ENCODE measurements at regions of chr14 and their contacts with region 1.

Region 1: GRCh38 chr14:41609704-41610183 is 3.1 kb downstream of the LRFN5 start:
- DNase-seq: peak; percentile 95
- H3K4me3 ChIP-seq: peak overlapping the region; percentile 79
- H3K27ac ChIP-seq: peak overlapping the region; percentile 84
- H3K4me1 ChIP-seq: peaks cover 29% of the 10 kb centered on the region
- H3K27me3 ChIP-seq: no peaks in the 10 kb centered on the region
- CTCF ChIP-seq: peak; percentile 84

Region 2: DNA sequence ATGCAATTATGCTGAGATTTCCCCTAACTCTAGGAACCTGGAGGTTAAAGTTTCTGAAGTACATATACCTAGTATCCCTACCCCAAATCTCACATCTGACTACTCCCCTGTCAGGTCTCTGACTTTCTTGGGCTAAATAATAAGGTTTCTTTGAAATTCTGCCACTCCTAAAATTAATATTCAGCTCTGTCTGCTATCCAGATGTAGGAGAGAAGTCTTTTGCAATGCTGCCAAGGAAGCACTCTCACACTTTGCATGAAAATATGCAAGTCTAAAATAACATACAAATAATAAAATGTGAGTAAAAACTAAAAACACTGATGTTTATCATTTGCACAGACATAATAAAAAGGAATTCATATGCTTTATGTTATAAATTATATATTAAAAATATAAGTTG is 199.9 kb before region 1 on chr14:
- CTCF ChIA-PET with region 1: no interaction called
- POLR2A ChIA-PET with region 1: no interaction called
- intact Hi-C with region 1: no loop called
- DNase-seq: no peak
- H3K4me3 ChIP-seq: no peak overlapping the region
- H3K27ac ChIP-seq: no peak overlapping the region
- H3K4me1 ChIP-seq: no peaks in the 10 kb centered on the region
- H3K27me3 ChIP-seq: no peaks in the 10 kb centered on the region
- CTCF ChIP-seq: no peak

Region 3: DNA sequence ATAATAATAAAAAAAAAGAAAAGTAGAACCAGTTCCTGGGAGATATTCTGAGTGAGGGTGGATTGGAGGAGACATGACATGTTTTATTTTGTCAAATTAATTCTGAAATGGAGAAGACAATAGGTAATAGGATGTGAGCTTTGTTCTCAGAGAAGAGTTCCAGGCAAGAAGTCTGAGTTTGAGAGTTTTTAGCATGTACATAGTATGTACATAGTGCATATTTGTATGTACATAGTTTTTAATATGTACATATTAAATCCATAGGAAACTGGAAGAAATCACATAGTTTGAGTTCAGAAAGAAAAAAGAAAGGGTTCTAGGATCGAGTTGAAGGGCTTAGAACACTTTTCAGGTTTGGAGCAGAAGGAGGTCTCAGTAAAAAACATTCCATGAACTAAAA is 44.5 kb after region 1 on chr14:
- CTCF ChIA-PET with region 1: no interaction called
- POLR2A ChIA-PET with region 1: no interaction called
- intact Hi-C with region 1: no loop called
- DNase-seq: no peak
- H3K4me3 ChIP-seq: no peak overlapping the region
- H3K27ac ChIP-seq: no peak overlapping the region
- H3K4me1 ChIP-seq: peaks cover 26% of the 10 kb centered on the region
- H3K27me3 ChIP-seq: no peaks in the 10 kb centered on the region
- CTCF ChIP-seq: no peak

Region 4: GRCh38 chr14:41668356-41668755 is 58.6 kb after region 1 on chr14:
- CTCF ChIA-PET with region 1: no interaction called
- POLR2A ChIA-PET with region 1: no interaction called
- intact Hi-C with region 1: loop called (anchors 5 kb)
- DNase-seq: peak; percentile 93
- H3K4me3 ChIP-seq: peak overlapping the region; percentile 18
- H3K27ac ChIP-seq: peak overlapping the region; percentile 88
- H3K4me1 ChIP-seq: peaks cover 62% of the 10 kb centered on the region
- H3K27me3 ChIP-seq: no peaks in the 10 kb centered on the region
- CTCF ChIP-seq: no peak

Region 5: DNA sequence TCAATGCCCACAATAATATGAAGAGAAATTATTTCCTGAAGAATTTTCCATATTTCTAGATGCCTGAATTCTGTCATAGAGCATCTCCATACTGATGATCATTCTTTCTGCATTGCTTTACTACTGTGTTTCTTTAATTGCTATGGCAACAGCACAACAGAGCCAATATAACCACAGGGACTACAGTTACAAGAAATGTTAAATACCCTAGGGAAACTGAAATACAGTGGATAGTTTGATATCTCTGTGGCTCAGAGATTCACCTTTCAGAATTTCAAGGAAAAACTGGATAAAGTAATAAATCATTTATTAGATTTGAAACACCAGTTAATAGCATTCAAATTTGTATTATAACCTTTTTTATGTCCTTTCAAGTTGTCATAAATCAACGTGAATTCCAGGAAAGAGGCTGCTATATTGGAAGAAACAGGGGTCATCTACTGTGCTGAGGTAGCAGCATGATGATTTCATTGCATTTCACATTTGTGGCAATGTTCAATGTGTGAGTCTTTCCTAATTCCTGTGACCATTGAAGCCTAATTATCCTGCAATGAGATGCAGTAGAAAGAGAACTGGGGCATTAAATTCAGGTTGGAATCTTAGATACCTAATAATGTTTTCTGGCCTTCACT is 264.1 kb after region 1 on chr14:
- CTCF ChIA-PET with region 1: no interaction called
- POLR2A ChIA-PET with region 1: no interaction called
- intact Hi-C with region 1: loop called (anchors 10 kb)
- DNase-seq: peak; percentile 86
- H3K4me3 ChIP-seq: peak overlapping the region; percentile 13
- H3K27ac ChIP-seq: peak overlapping the region; percentile 91
- H3K4me1 ChIP-seq: peaks cover 40% of the 10 kb centered on the region
- H3K27me3 ChIP-seq: no peaks in the 10 kb centered on the region
- CTCF ChIP-seq: no peak

Region 6: GRCh38 chr14:41891613-41892012 is 281.9 kb after region 1 on chr14:
- CTCF ChIA-PET with region 1: no interaction called
- POLR2A ChIA-PET with region 1: no interaction called
- intact Hi-C with region 1: no loop called
- DNase-seq: no peak
- H3K4me3 ChIP-seq: no peak overlapping the region
- H3K27ac ChIP-seq: no peak overlapping the region
- H3K4me1 ChIP-seq: no peaks in the 10 kb centered on the region
- H3K27me3 ChIP-seq: no peaks in the 10 kb centered on the region
- CTCF ChIP-seq: no peak

Region 7: DNA sequence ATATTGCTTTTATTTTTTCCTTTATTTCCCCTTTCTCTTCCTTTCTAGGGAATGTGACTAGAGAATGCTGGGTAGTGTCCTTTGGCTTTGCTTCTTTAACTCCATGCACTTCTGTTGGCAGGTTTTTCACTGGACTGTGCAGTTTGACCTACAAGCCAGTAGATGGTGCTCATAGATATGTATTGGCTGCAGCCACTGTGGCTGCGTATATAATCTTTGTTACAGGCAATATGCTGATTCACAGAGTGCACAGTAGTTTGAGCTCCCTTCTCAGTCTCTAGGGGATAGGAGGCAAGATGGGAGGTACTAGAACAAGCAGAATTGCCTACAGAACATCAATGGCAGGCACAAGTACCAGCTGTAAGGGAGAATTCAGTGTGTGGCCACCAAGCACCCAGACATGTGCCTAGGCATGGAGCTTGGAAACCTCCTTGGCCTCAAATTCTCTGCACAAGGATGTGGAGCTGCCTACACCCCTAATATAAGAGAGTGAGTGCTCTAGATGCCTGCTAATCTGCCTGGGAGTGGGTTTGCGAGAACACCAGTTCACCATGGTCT is 500.5 kb after region 1 on chr14:
- CTCF ChIA-PET with region 1: no interaction called
- POLR2A ChIA-PET with region 1: no interaction called
- intact Hi-C with region 1: loop called (anchors 5 kb)
- DNase-seq: peak; percentile 74
- H3K4me3 ChIP-seq: no peak overlapping the region
- H3K27ac ChIP-seq: no peak overlapping the region
- H3K4me1 ChIP-seq: no peaks in the 10 kb centered on the region
- H3K27me3 ChIP-seq: no peaks in the 10 kb centered on the region
- CTCF ChIP-seq: peak; percentile 73

Region 8: DNA sequence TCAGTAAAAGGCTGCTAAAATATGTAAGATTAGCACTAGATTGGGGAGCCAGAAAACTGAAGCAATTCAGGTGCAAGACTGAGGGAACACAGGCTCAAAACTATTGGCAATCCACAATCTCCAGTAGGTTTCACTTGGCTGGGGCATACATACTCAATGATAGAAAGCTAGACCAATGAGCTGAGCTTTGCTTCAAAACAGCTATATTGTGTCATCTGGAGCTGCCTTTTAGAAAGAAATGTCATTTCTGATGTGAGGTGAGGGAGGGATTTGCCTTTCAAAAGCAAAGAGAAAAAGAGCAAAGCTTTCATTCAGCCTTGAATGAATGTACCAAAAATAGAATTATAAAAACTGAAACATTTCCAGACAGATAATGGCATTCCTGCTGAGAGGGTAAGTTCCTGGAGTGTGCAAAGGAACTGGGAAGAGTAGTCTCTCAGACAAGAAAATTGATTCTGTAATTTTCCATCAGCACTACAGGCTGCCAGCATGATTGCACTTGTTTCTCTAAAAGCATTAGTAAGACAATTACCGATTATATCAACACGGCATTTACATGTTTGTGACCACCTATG is 706.9 kb after region 1 on chr14:
- CTCF ChIA-PET with region 1: no interaction called
- POLR2A ChIA-PET with region 1: no interaction called
- intact Hi-C with region 1: loop called (anchors 10 kb)
- DNase-seq: peak; percentile 90
- H3K4me3 ChIP-seq: no peak overlapping the region
- H3K27ac ChIP-seq: no peak overlapping the region
- H3K4me1 ChIP-seq: peaks cover 12% of the 10 kb centered on the region
- H3K27me3 ChIP-seq: no peaks in the 10 kb centered on the region
- CTCF ChIP-seq: no peak